ENCODE measurements at regions of chr7 and their contacts with region 1.

Region 1: GRCh38 chr7:101688183-101688831 is 59.2 kb upstream of the MYL10 start:
- DNase-seq: peak; percentile 87
- ATAC-seq: peak; percentile 96
- H3K4me3 Mint-ChIP-seq: no peak overlapping the region
- H3K27ac Mint-ChIP-seq: no peak overlapping the region
- H3K4me1 Mint-ChIP-seq: no peaks in the 10 kb centered on the region
- H3K27me3 Mint-ChIP-seq: no peaks in the 10 kb centered on the region
- CTCF ChIP-seq: peak; percentile 98

Region 2: GRCh38 chr7:102044984-102045673 is 356.8 kb after region 1 on chr7:
- CTCF ChIA-PET with region 1: no interaction called
- POLR2A ChIA-PET with region 1: no interaction called
- intact Hi-C with region 1: no loop called
- DNase-seq: peak; percentile 12
- ATAC-seq: no peak
- H3K4me3 Mint-ChIP-seq: no peak overlapping the region
- H3K27ac Mint-ChIP-seq: no peak overlapping the region
- H3K4me1 Mint-ChIP-seq: peaks cover 20% of the 10 kb centered on the region
- H3K27me3 Mint-ChIP-seq: no peaks in the 10 kb centered on the region
- CTCF ChIP-seq: no peak

Region 3: GRCh38 chr7:102236592-102237287 is 548.4 kb after region 1 on chr7:
- CTCF ChIA-PET with region 1: interaction called, 10 read pairs
- POLR2A ChIA-PET with region 1: no interaction called
- intact Hi-C with region 1: loop called (anchors 10 kb)
- DNase-seq: peak; percentile 65
- ATAC-seq: peak; percentile 73
- H3K4me3 Mint-ChIP-seq: no peak overlapping the region
- H3K27ac Mint-ChIP-seq: no peak overlapping the region
- H3K4me1 Mint-ChIP-seq: no peaks in the 10 kb centered on the region
- H3K27me3 Mint-ChIP-seq: no peaks in the 10 kb centered on the region
- CTCF ChIP-seq: peak; percentile 82

Measured in activated CD8-positive, alpha-beta T cell treated with anti-CD3 and anti-CD28 coated beads for 36 hours (primary cell).